ENCODE measurements at regions of chr12 and their contacts with region 1.

Region 1: DNA sequence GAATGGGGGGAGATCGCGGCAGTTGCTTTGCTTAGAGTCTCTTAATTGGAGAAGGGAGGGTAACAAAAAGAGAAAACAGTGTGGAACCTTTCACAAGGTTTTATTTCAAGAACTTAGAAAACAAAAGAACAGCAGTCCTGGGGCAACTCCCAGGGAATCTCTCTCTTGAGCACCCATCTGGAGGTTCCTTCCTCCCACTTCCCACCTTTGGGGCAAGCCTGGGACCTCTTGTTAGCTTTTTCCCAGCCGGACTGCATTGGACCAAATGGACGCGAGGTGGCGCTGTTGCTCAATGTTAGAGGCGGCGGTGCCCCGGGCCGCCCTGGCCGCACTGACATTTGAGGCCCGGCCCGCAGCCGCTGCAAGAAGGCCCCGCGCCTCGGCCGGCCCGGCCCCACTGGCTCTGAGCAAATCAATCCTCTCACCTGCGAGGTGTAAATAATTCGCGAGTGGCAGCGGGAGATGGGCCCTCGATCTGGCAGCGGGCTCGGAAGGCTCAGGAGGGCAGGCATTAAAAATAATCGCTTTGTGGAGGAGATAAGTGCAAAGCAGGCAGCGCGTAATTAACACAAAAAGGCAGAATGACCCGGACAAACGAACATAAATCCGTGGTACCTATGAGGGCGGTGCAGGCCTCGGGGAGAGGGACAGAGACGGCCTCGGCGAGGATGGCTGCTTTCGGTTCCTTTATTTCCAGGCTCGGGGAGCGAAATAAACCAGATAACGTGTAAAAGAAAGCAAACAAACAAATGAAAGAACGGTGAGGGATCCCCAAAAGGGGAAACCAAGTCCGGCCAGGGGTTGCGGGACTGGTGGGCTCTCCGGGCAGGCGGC is 2.7 kb upstream of the HOXC8 start:
- DNase-seq: peak; percentile 71 to 92 (median 86)
- ATAC-seq: peak; percentile 80
- H3K4me3 ChIP-seq: peak overlapping the region; percentile 24 to 62
- H3K4me3 Mint-ChIP-seq: peak overlapping the region; percentile 82
- H3K27ac ChIP-seq: no peak overlapping the region
- H3K27ac Mint-ChIP-seq: no peak overlapping the region
- H3K4me1 ChIP-seq: peaks cover 22% of the 10 kb centered on the region
- H3K4me1 Mint-ChIP-seq: peaks cover 25% of the 10 kb centered on the region
- H3K27me3 ChIP-seq: peaks cover 72 to 85% of the 10 kb centered on the region in 2 experiments
- H3K27me3 Mint-ChIP-seq: peaks cover 87% of the 10 kb centered on the region
- CTCF ChIP-seq: peak; percentile 93

Region 2: GRCh38 chr12:53856132-53856531 is 149.9 kb before region 1 on chr12:
- CTCF ChIA-PET with region 1: no interaction called
- POLR2A ChIA-PET with region 1: no interaction called
- intact Hi-C with region 1: no loop called
- DNase-seq: no peak
- ATAC-seq: no peak
- H3K4me3 ChIP-seq: no peak overlapping the region
- H3K4me3 Mint-ChIP-seq: no peak overlapping the region
- H3K27ac ChIP-seq: no peak overlapping the region
- H3K27ac Mint-ChIP-seq: no peak overlapping the region
- H3K4me1 ChIP-seq: no peaks in the 10 kb centered on the region
- H3K4me1 Mint-ChIP-seq: no peaks in the 10 kb centered on the region
- H3K27me3 ChIP-seq: peaks cover 3 to 4% of the 10 kb centered on the region in 2 experiments
- H3K27me3 Mint-ChIP-seq: peaks cover 36% of the 10 kb centered on the region
- CTCF ChIP-seq: no peak

Region 3: DNA sequence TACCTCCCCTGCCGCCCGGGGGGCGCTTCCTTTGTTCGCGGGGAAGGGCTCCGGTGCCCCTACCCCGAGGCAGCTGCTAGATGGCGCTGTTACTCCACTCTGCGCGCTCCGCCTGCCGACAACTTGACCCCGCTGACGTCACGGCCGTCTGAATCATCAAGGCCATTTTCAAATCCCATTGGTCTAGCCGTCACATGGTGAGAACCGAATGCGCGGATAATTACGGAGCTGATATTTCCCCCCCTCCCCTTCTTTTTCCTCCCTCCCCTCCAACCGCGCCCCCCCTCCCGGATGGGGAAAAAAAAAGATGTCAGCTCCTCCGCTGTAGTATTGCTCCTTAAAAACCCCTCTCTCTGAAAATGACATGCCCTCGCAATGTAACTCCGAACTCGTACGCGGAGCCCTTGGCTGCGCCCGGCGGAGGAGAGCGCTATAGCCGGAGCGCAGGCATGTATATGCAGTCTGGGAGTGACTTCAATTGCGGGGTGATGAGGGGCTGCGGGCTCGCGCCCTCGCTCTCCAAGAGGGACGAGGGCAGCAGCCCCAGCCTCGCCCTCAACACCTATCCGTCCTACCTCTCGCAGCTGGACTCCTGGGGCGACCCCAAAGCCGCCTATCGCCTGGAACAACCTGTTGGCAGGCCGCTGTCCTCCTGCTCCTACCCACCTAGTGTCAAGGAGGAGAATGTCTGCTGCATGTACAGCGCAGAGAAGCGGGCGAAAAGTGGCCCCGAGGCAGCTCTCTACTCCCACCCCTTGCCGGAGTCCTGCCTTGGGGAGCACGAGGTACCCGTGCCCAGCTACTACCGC is 21.0 kb before region 1 on chr12 and contains the start of gene HOXC10:
- CTCF ChIA-PET with region 1: interaction called, 29 read pairs
- POLR2A ChIA-PET with region 1: interaction called, 4 read pairs
- intact Hi-C with region 1: no loop called
- DNase-seq: peak; percentile 26 to 86 (median 72)
- ATAC-seq: peak; percentile 66
- H3K4me3 ChIP-seq: no peak within 1 kb of the TSS
- H3K4me3 Mint-ChIP-seq: peak within 1 kb of the TSS; percentile 49
- H3K27ac ChIP-seq: no peak within 1 kb of the TSS
- H3K27ac Mint-ChIP-seq: no peak within 1 kb of the TSS
- H3K4me1 ChIP-seq: peaks cover 27% of the 10 kb centered on the region
- H3K4me1 Mint-ChIP-seq: peaks cover 36% of the 10 kb centered on the region
- H3K27me3 ChIP-seq: peaks cover 75 to 85% of the 10 kb centered on the region in 2 experiments
- H3K27me3 Mint-ChIP-seq: peaks cover 90% of the 10 kb centered on the region
- CTCF ChIP-seq: peak; percentile 44
- total RNA-seq, gene HOXC10: not detected

Region 4: GRCh38 chr12:54017878-54018467 is 11.9 kb after region 1 on chr12:
- CTCF ChIA-PET with region 1: interaction called, 10 read pairs
- POLR2A ChIA-PET with region 1: interaction called, 5 read pairs
- intact Hi-C with region 1: loop called in 1 of 2 experiments (anchors 1 kb)
- DNase-seq: peak; percentile 53 to 91 (median 70)
- ATAC-seq: peak; percentile 86
- H3K4me3 ChIP-seq: peak overlapping the region; percentile 69 to 71
- H3K4me3 Mint-ChIP-seq: peak overlapping the region; percentile 83
- H3K27ac ChIP-seq: peak overlapping the region in 1 of 2 experiments; percentile 56
- H3K27ac Mint-ChIP-seq: no peak overlapping the region
- H3K4me1 ChIP-seq: peaks cover 16% of the 10 kb centered on the region
- H3K4me1 Mint-ChIP-seq: peaks cover 22% of the 10 kb centered on the region
- H3K27me3 ChIP-seq: peaks cover 41 to 48% of the 10 kb centered on the region in 2 experiments
- H3K27me3 Mint-ChIP-seq: peaks cover 71% of the 10 kb centered on the region
- CTCF ChIP-seq: no peak

Region 5: GRCh38 chr12:54201001-54201794 is 195.1 kb after region 1 on chr12:
- CTCF ChIA-PET with region 1: interaction called, 372 read pairs
- POLR2A ChIA-PET with region 1: interaction called, 5 read pairs
- intact Hi-C with region 1: loop called (anchors 1 kb)
- DNase-seq: peak; percentile 35 to 78 (median 62)
- ATAC-seq: peak; percentile 98
- H3K4me3 ChIP-seq: no peak overlapping the region
- H3K4me3 Mint-ChIP-seq: no peak overlapping the region
- H3K27ac ChIP-seq: no peak overlapping the region
- H3K27ac Mint-ChIP-seq: no peak overlapping the region
- H3K4me1 ChIP-seq: no peaks in the 10 kb centered on the region
- H3K4me1 Mint-ChIP-seq: no peaks in the 10 kb centered on the region
- H3K27me3 ChIP-seq: peaks cover 10 to 24% of the 10 kb centered on the region in 2 experiments
- H3K27me3 Mint-ChIP-seq: peaks cover 70% of the 10 kb centered on the region
- CTCF ChIP-seq: peak; percentile 90